ENCODE measurements at regions of chr5 and their contacts with region 1.

Region 1: GRCh38 chr5:147822686-147823491 is 8.6 kb downstream of the SPINK1 start:
- DNase-seq: peak; percentile 70
- ATAC-seq: peak; percentile 69

Region 2: GRCh38 chr5:147509041-147509709 is 313.7 kb before region 1 on chr5:
- intact Hi-C with region 1: no loop called
- DNase-seq: peak; percentile 54
- ATAC-seq: peak; percentile 64

Region 3: DNA sequence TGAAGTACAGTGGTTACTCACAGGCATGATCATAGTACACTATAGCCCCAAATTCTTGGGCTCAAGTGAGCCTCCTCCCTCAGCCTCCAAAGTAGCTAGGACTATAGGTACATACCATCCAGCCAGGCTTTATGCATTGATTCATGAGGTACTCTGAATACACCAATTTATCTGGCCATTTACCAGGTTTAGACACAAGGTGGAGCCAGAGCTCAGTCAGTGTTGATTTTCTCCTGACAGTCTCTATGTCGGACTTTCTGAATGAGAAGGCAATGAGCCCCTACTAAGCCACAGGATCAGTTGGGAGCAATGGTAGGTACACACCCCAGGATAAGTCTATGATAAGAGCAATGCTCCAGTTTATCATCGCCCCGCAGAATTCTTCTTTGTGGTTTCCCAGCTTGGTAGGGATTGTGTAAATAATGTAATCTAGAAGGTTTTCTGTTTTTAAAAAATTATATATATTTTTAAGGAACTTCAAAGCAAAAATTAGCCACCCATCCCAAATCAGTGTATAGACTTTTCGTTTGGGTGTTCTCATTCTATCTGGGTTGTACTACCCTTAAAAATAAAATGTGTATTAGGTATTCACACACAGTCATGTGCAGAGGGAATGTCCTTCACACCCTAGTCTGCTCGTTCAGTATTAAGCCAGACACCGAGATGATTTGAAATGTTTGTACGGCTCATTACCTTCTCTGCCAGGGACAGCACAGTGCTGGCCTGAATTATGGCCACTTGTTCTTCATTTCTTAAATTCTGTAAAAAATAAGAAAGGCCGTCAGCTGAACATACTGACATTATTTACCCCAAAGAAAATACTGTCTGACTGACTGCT is 194.6 kb before region 1 on chr5:
- intact Hi-C with region 1: loop called (anchors 1 kb)
- DNase-seq: no peak
- ATAC-seq: peak; percentile 57

Region 4: DNA sequence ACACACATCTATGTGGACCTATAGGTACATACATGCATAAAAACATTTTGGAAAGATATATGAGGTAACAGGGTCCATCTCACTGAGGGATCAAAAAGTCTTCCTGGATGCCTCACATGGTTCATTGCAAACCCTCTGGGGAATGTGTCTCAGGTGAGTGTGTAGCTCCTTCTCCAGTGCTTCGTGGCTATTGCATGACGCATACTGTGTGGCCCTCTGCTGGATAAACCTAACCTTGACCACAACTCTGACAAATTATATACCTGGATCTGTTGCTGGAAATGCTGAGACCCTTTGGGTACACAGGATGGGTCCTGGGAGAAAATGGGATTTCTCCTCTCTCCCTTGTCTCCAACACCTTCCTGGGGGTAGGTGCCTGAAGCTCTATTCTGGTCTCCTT is 132.3 kb before region 1 on chr5:
- intact Hi-C with region 1: no loop called
- DNase-seq: no peak
- ATAC-seq: no peak